ENCODE measurements at regions of chr19 and their contacts with region 1.

Region 1: DNA sequence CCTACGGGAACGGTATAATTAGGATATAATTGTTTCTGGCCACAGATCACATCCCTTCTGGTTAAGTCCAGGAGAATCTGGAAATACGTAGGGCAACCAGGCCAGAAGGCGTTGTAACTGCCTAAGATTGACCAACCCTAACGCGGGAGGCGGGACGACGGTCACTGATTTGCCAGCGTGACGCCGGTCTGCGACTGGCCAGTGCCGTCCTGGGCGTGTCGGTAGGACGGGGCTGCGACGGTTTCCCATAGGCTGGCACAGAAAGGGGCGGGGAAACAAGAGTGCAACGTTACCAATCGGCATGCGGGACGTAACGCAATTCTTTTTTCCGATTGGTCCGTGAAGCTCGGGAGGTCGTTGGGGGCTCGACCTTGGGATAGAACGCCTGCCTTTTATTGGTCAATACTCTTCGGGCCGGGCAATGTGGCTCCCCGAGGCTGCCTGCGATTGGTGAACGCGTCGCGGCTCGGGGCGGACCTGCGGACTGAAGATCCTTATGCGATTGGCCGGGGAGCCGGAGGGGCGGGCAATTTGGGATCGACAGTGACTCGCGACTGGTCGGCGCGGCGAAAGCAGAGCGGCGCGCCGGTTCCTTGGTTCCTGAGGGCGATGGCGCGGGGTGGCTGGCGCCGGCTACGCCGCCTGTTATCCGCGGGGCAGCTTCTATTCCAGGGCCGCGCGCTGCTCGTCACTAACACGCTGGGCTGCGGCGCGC is at the start of gene MPV17L2:
- DNase-seq: peak; percentile 99 to 100
- H3K4me3 ChIP-seq: peak within 1 kb of the TSS; percentile 90
- H3K27ac ChIP-seq: peak within 1 kb of the TSS; percentile 73
- H3K4me1 ChIP-seq: peaks cover 16% of the 10 kb centered on the region
- H3K27me3 ChIP-seq: no peaks in the 10 kb centered on the region
- CTCF ChIP-seq: no peak
- total RNA-seq, gene MPV17L2: 11.2 and 12.1 TPM in 2 replicates

Region 2: DNA sequence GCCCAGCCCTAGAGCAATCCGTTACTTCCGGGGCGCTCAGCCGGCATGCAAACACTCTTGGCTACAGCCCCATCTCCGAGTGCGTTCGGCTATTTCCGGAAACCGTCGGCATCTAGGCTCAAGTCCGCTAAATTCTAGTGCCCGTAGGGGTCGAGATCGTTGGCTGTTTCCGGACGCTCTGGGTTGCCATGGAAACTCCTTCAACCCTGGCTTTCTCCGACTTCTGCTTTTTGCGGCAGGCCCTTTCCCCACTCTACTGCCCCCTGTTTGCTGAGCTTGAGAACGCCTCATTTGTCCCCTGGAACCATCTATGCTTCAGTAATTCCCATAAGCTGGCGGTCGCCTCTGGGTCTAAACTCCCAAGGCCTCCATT is 40.4 kb before region 1 on chr19:
- CTCF ChIA-PET with region 1: no interaction called
- POLR2A ChIA-PET with region 1: interaction called, 3 read pairs
- intact Hi-C with region 1: loop called (anchors 2 kb)
- DNase-seq: peak; percentile 92 to 93
- H3K4me3 ChIP-seq: peak overlapping the region; percentile 73
- H3K27ac ChIP-seq: peak overlapping the region; percentile 91
- H3K4me1 ChIP-seq: peaks cover 15% of the 10 kb centered on the region
- H3K27me3 ChIP-seq: no peaks in the 10 kb centered on the region
- CTCF ChIP-seq: peak; percentile 82

Region 3: DNA sequence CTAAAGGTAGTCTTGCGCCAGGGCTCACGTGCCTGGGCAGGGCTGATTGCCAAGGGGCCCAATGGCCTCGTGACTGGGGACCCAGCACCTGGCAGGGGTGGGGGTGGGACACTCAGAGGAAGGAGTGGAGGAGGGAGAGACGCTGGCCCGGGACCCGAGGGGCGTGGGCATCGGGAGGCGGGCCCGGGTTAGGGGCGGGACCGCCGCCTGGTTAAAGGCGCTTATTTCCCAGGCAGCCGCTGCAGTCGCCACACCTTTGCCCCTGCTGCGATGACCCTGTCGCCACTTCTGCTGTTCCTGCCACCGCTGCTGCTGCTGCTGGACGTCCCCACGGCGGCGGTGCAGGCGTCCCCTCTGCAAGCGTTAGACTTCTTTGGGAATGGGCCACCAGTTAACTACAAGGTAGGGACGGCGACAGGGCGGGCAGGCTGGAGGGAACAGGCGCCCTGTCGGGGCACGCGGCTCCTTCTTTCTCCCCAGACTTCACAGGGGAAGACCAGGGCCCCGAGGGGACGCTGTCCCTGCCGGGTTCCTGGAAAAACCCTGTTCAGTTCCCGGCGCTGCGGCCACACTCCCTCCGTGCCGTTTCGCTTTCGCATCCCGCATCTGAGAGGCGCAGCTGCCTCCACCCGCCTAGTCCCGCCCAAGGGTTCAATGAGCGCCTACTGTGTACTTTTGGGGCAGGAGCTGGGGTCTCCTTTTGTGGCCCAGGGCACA is 19.1 kb before region 1 on chr19 and contains the start of gene IFI30:
- CTCF ChIA-PET with region 1: interaction called, 4 read pairs
- POLR2A ChIA-PET with region 1: no interaction called
- intact Hi-C with region 1: loop called (anchors 1 kb)
- DNase-seq: peak; percentile 63 to 84
- H3K4me3 ChIP-seq: peak within 1 kb of the TSS; percentile 66
- H3K27ac ChIP-seq: peak within 1 kb of the TSS; percentile 11; the same call in 1 of the 2 replicates
- H3K4me1 ChIP-seq: peaks cover 15% of the 10 kb centered on the region
- H3K27me3 ChIP-seq: no peaks in the 10 kb centered on the region
- CTCF ChIP-seq: no peak
- total RNA-seq, gene IFI30: 26.1 and 35.8 TPM in 2 replicates

Region 4: DNA sequence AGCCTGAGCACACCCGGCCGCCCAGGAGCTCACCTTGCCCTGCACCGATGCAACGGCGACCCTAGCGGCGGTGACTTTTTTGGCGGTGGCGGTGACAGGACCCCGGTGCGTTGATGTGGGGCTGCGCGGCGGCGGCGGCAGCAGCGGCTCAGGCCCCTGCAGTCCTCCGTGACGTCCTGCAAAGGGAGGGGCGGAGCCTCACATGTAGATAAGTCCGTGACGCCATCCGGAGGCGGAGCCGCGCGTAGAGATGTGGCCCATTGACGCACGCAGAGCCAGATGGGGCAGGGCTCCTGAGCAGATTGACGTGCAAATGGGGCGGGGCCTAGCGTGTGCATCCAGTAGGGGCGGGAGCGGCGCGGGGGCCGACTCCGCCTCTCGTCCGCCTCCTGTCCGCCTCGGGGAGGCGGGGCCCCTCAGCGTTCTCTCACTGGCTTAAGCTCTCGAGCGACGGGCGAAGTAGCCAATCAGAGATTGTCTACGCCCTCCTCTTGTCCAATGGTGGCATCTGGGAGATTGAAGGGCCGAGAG is 11.1 kb after region 1 on chr19 and contains the start of gene RAB3A:
- CTCF ChIA-PET with region 1: no interaction called
- POLR2A ChIA-PET with region 1: no interaction called
- intact Hi-C with region 1: loop called (anchors 1 kb)
- DNase-seq: peak; percentile 99 to 100
- H3K4me3 ChIP-seq: peak within 1 kb of the TSS; percentile 73
- H3K27ac ChIP-seq: peak within 1 kb of the TSS; percentile 46
- H3K4me1 ChIP-seq: peaks cover 13% of the 10 kb centered on the region
- H3K27me3 ChIP-seq: no peaks in the 10 kb centered on the region
- CTCF ChIP-seq: no peak
- total RNA-seq, gene RAB3A: 4.0 and 4.1 TPM in 2 replicates

Region 5: GRCh38 chr19:18251587-18252369 is 58.9 kb after region 1 on chr19:
- CTCF ChIA-PET with region 1: interaction called, 3 read pairs
- POLR2A ChIA-PET with region 1: interaction called, 8 read pairs
- intact Hi-C with region 1: loop called (anchors 5 kb)
- DNase-seq: peak; percentile 64 to 70
- H3K4me3 ChIP-seq: no peak overlapping the region
- H3K27ac ChIP-seq: no peak overlapping the region
- H3K4me1 ChIP-seq: peaks cover 39% of the 10 kb centered on the region
- H3K27me3 ChIP-seq: no peaks in the 10 kb centered on the region
- CTCF ChIP-seq: peak; percentile 100

Region 6: GRCh38 chr19:18340190-18340989 is 147.6 kb after region 1 on chr19 and contains the start of gene PGPEP1:
- CTCF ChIA-PET with region 1: no interaction called
- POLR2A ChIA-PET with region 1: interaction called, 3 read pairs
- intact Hi-C with region 1: loop called (anchors 5 kb)
- DNase-seq: peak; percentile 46 to 77
- H3K4me3 ChIP-seq: peak within 1 kb of the TSS; percentile 73
- H3K27ac ChIP-seq: no peak within 1 kb of the TSS
- H3K4me1 ChIP-seq: peaks cover 23% of the 10 kb centered on the region
- H3K27me3 ChIP-seq: no peaks in the 10 kb centered on the region
- CTCF ChIP-seq: no peak
- total RNA-seq, gene PGPEP1: 42.0 and 53.6 TPM in 2 replicates

Region 7: DNA sequence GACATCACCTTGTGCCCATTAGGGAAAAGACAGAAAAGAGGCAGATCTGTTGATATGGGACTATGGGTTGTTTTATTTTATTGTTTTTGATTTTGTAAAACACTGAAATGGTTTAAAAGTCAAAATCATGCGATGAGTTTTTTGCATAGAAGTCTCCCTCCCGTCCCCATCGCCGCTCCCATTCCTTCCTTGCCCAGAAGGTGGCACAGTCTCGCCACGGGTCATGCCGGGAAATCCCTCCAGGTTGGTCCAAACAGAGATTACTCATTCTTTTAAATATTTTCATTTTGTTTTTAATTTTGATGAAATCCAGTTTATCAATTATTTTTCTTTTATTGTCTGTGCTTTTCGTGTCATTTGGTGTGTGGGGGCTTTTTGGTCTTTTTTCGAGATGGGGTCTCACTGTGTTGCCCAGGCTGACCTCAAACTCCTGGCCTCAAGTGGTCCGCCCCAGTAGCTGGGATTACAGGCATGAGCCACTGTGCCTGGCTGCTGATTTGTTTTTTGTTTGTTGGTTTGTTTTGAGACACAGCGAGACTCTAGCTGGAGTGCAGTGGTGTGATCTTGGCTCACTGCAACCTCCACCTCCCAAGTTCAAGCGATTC is 156.8 kb after region 1 on chr19:
- CTCF ChIA-PET with region 1: interaction called, 14 read pairs
- POLR2A ChIA-PET with region 1: no interaction called
- intact Hi-C with region 1: loop called (anchors 5 kb)
- DNase-seq: peak; percentile 63
- H3K4me3 ChIP-seq: no peak overlapping the region
- H3K27ac ChIP-seq: no peak overlapping the region
- H3K4me1 ChIP-seq: peaks cover 10% of the 10 kb centered on the region; the same call in 1 of the 2 replicates
- H3K27me3 ChIP-seq: no peaks in the 10 kb centered on the region
- CTCF ChIP-seq: peak; percentile 93

Region 8: DNA sequence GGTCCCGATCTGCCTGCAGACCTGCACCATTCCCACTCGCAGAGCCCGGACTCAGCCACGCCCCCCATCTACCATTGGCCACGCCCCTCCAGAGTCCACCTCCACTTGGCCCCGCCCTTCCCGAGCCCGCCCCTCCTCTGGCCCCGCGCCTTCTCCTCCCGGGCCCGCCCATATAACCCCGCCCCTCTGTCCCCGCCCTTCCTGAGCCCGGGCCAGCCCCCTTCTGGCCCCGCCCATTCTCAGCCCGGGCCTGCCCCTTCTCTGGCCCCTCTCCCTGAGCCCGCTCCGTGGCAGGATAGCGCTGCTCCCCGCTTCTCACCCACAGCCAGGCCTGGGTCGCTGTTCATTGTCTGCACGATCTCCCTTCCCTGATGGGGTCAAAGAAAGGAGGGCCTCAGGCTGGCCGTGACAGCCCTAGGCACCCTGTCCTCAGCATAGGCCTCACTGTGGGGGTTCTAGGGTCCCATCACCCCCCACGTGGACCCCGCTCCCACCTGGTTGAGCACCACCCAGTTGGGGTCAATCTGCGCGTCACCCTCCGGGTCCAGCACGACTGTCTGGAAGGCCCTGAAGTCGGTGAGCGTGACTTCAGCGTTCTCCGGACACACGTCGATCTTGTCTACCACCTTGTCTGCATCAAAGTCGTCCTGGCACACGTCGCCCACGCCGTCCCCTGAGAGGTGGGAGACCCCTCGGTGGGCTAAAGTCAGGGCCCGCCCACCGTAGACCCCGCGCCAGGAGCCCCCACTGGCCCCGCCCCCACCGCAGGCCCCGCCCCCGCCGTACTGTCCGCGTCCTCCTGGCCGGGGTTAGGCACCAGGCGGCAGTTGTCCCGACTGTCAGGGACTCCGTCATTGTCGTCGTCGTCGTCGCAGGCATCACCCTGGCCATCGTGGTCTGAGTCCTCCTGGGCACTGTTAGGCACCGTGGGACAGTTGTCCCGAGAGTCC is 592.6 kb after region 1 on chr19:
- CTCF ChIA-PET with region 1: no interaction called
- POLR2A ChIA-PET with region 1: no interaction called
- intact Hi-C with region 1: no loop called
- DNase-seq: peak; percentile 62 to 78
- H3K4me3 ChIP-seq: no peak overlapping the region
- H3K27ac ChIP-seq: no peak overlapping the region
- H3K4me1 ChIP-seq: no peaks in the 10 kb centered on the region
- H3K27me3 ChIP-seq: peaks cover 2% of the 10 kb centered on the region; the same call in 1 of the 2 replicates
- CTCF ChIP-seq: no peak

Measured in PC-9 (cell line).